Activated naive CD4-positive, alpha-beta T cell treated with anti-CD3 and anti-CD28 coated beads for 36 hours (primary cell): ENCODE measurements at regions of chrX and their contacts with region 1.

Region 1: DNA sequence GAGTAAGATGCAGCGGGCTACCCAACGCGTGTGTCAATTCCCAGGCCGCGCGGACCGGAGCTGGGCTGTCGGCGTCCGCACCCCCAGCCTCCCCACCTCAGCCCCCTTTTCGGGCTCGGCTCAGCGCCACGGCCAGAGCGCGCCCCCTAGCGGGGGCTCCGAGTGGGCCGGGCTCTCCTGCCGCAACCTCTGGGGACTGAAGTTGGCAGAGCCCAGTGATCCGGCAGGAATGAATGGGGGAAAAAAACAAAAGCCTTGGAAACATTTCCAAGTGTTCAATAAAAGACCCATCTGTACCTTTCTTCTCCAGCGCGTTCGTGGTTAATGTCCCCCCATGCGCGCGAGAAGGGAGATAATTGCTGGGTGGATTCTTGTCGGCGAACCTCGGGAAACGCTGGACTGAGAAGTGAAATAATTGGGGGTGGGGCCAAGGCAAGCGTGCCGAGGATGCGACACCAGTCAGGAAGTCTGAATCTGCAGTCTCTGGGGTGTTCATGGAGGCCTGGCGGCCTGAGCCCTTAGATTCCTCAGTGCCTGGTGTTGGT is 5.2 kb upstream of the ARX start:
- DNase-seq: peak; percentile 42
- H3K4me3 Mint-ChIP-seq: peak overlapping the region; percentile 12
- H3K27ac Mint-ChIP-seq: no peak overlapping the region
- H3K4me1 Mint-ChIP-seq: peaks cover 23% of the 10 kb centered on the region
- H3K27me3 Mint-ChIP-seq: peaks cover 59% of the 10 kb centered on the region

Region 2: DNA sequence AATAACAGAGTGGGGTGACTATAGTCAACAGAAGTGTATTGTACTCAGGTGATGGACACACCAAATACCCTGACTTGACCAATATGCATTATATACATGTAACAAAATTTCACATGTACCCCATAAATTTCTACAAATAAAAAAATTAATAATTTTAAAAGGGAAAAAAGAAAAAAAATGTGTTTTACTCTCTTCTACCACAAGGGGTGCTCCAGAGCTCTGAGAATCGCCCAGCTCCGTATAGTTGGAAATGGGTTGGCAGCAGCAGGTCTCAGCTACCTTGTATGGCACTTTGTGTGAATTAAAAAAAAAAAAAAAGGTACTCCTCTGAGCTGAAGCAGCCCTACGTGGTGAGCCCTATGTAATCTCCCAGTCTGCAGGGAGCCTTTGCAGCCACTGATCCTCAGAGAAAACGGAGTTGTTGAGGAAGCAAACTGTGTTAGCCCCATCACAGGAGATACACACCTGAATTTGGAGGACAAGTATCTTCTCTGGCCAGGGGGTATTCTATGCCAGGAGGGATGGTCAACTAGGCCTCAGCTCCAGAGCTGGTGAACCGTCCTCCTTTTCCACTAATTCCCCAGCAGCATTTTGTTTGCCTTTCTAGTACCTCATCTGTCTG is 344.5 kb before region 1 on chrX:
- CTCF ChIA-PET with region 1: no interaction called
- intact Hi-C with region 1: loop called (anchors 10 kb)
- DNase-seq: peak; percentile 6
- H3K4me3 Mint-ChIP-seq: no peak overlapping the region
- H3K27ac Mint-ChIP-seq: no peak overlapping the region
- H3K4me1 Mint-ChIP-seq: no peaks in the 10 kb centered on the region
- H3K27me3 Mint-ChIP-seq: peaks cover 6% of the 10 kb centered on the region

Region 3: GRCh38 chrX:24838629-24839028 is 182.3 kb before region 1 on chrX:
- CTCF ChIA-PET with region 1: interaction called, 3 read pairs
- intact Hi-C with region 1: loop called (anchors 1 kb)
- DNase-seq: peak; percentile 8
- H3K4me3 Mint-ChIP-seq: no peak overlapping the region
- H3K27ac Mint-ChIP-seq: no peak overlapping the region
- H3K4me1 Mint-ChIP-seq: no peaks in the 10 kb centered on the region
- H3K27me3 Mint-ChIP-seq: no peaks in the 10 kb centered on the region

Region 4: GRCh38 chrX:25007059-25008053 is 13.6 kb before region 1 on chrX:
- CTCF ChIA-PET with region 1: interaction called, 11 read pairs
- intact Hi-C with region 1: loop called (anchors 2 kb)
- DNase-seq: no peak
- H3K4me3 Mint-ChIP-seq: peak overlapping the region; percentile 15
- H3K27ac Mint-ChIP-seq: no peak overlapping the region
- H3K4me1 Mint-ChIP-seq: peaks cover 17% of the 10 kb centered on the region
- H3K27me3 Mint-ChIP-seq: peaks cover 61% of the 10 kb centered on the region

Region 5: GRCh38 chrX:25144043-25144940 is 123.3 kb after region 1 on chrX:
- CTCF ChIA-PET with region 1: interaction called, 6 read pairs
- intact Hi-C with region 1: loop called (anchors 1 kb)
- DNase-seq: peak; percentile 51
- H3K4me3 Mint-ChIP-seq: no peak overlapping the region
- H3K27ac Mint-ChIP-seq: no peak overlapping the region
- H3K4me1 Mint-ChIP-seq: no peaks in the 10 kb centered on the region
- H3K27me3 Mint-ChIP-seq: peaks cover 2% of the 10 kb centered on the region